Thyroid gland (tissue), 4 donors: ENCODE measurements at regions of chr1 and their contacts with region 1.

Region 1: DNA sequence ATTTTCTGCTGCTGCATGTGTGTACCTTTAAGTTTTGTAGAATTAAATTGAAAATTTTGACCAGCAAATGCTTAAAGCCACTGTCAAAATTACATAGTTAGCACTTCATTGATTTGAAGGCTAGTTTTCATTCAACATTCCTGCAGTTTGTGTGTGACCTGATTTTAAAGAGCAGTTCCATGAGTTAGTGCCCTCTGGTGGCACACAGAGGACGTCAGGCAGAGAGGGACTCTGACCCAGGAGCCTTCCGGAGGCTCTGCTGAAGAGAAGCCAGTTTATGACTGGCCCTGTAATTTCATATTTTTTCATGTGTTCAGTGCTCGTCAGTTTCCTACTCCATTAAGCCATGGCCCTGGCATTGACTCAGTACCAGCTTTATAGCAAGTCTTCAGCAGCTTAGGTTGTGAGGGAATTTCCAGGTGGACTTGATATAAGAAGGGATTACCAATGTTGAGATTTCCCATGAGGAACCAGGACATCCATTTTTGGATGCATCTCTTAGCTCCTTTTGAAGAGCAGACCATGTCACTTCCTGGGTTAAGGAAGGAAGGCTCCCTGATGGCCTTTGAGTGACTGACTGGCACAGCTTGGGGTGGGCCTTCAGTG is 104.7 kb downstream of the CAMTA1 start:
- DNase-seq: peak; percentile 67 to 75
- H3K4me3 ChIP-seq: no peak overlapping the region
- H3K27ac ChIP-seq: no peak overlapping the region
- H3K4me1 ChIP-seq: peaks cover 0 to 3% of the 10 kb centered on the region in 2 donors
- H3K27me3 ChIP-seq: no peaks in the 10 kb centered on the region
- CTCF ChIP-seq: peak; percentile 44 to 87 (median 78)
- POLR2A ChIP-seq: no peak

Region 2: DNA sequence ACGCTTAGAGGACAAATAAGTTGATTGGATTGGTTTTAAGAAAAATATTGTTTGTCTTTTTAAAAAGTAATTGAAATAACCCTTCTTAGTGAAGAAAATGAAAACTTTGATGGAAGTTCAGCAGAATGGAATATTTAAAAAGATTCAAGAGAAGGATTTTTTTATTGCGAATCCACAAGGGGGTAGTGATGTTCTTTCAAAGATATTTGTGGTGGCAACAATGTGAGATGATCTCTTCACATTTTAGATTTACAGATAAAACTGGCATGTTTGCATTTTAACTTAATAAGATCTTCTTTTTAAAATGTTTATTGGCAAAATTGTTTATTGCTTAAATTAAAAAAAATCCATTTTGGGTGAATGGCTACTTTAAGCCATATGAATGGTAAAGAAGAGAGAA is 95.8 kb before region 1 on chr1:
- intact Hi-C with region 1: loop called (anchors 5 kb)
- DNase-seq: no peak
- H3K4me3 ChIP-seq: no peak overlapping the region
- H3K27ac ChIP-seq: no peak overlapping the region
- H3K4me1 ChIP-seq: peaks cover 11 to 18% of the 10 kb centered on the region in 2 donors
- H3K27me3 ChIP-seq: no peaks in the 10 kb centered on the region
- CTCF ChIP-seq: peak in 4 of 6 experiments; percentile 43 to 68 (median 54)
- POLR2A ChIP-seq: no peak

Region 3: DNA sequence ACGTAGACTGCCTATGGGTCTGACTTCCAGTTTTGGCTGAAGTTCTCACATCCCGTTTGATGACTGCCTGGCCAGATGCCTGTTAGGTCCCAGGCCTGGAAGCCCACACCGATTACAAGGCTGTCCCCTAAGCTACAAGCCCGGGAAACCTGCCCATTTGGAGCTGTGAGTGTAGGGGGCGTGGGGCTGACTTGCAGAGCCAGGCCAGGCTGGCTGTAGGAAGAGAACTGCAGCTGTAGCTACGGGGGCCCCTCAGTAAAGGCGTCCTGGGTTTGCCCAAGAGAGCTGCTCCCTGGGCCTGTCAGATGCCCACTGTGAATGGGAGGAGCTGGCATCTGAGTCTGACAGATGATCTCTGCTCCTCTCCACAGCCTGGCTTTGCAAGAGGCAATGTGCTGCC is 95.0 kb after region 1 on chr1:
- intact Hi-C with region 1: no loop called
- DNase-seq: no peak
- H3K4me3 ChIP-seq: no peak overlapping the region
- H3K27ac ChIP-seq: no peak overlapping the region
- H3K4me1 ChIP-seq: no peaks in the 10 kb centered on the region
- H3K27me3 ChIP-seq: no peaks in the 10 kb centered on the region
- CTCF ChIP-seq: no peak
- POLR2A ChIP-seq: no peak